ENCODE measurements at regions of chrX and their contacts with region 1.

Region 1: DNA sequence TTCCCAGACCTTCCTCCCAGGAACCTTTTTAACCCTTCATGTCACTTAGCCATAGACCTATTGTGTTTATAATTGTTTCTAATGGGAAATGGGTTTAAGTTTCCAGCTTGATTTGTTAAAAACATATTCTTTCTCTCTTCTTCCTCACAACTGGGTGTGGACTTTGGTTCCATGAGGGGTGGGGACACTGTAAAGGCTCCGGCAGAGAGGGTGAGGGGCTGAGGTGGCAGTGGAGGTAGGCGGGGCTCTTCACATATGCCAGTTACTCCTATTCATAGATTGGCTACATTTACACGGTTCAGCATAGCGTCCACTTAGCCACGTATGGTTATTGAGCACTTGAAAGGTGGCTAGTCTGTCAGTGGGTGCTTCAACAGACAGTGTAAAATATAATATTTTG is 7.8 kb downstream of the INTS6L start:
- DNase-seq: no peak
- H3K4me3 Mint-ChIP-seq: no peak overlapping the region
- H3K27ac Mint-ChIP-seq: no peak overlapping the region
- H3K4me1 Mint-ChIP-seq: peaks cover 51% of the 10 kb centered on the region
- H3K27me3 Mint-ChIP-seq: no peaks in the 10 kb centered on the region

Region 2: GRCh38 chrX:135565401-135565800 is 37.1 kb after region 1 on chrX:
- intact Hi-C with region 1: loop called (anchors 5 kb)
- DNase-seq: no peak
- H3K4me3 Mint-ChIP-seq: no peak overlapping the region
- H3K27ac Mint-ChIP-seq: no peak overlapping the region
- H3K4me1 Mint-ChIP-seq: no peaks in the 10 kb centered on the region
- H3K27me3 Mint-ChIP-seq: no peaks in the 10 kb centered on the region

Measured in activated T-helper 1 cell treated with anti-CD3 and anti-CD28 coated beads, Interleukin-12 subunit alpha, Interleukin-12 subunit beta, Interleukin-2, Interleukin-4 antibody, amounts not matched to agents 30 ng/mL and 10 ng/mL and 1 ng/mL, durations not matched to agents 14 hours and 24 hours and 36 hours (primary cell).